ENCODE measurements at regions of chr19 and their contacts with region 1.

Region 1: GRCh38 chr19:42108527-42109389 is 23.5 kb downstream of the POU2F2 start:
- DNase-seq: peak; percentile 68
- H3K4me3 ChIP-seq: no peak overlapping the region
- H3K27ac ChIP-seq: no peak overlapping the region
- H3K4me1 ChIP-seq: peaks cover 35% of the 10 kb centered on the region
- H3K27me3 ChIP-seq: no peaks in the 10 kb centered on the region
- CTCF ChIP-seq: peak; percentile 100

Region 2: GRCh38 chr19:41993612-41994483 is 114.9 kb before region 1 on chr19 and contains the start of gene ATP1A3:
- CTCF ChIA-PET with region 1: no interaction called
- dilution Hi-C with region 1: no loop called
- in situ Hi-C with region 1: no loop called
- intact Hi-C with region 1: no loop called
- DNase-seq: peak; percentile 52
- H3K4me3 ChIP-seq: peak within 1 kb of the TSS in 1 of 3 experiments; percentile 23
- H3K27ac ChIP-seq: no peak within 1 kb of the TSS
- H3K4me1 ChIP-seq: peaks cover 6% of the 10 kb centered on the region
- H3K27me3 ChIP-seq: peaks cover 7% of the 10 kb centered on the region
- CTCF ChIP-seq: no peak
- total RNA-seq, gene ATP1A3: 0.87 TPM in 1 of 2 donors, not detected in the other

Region 3: DNA sequence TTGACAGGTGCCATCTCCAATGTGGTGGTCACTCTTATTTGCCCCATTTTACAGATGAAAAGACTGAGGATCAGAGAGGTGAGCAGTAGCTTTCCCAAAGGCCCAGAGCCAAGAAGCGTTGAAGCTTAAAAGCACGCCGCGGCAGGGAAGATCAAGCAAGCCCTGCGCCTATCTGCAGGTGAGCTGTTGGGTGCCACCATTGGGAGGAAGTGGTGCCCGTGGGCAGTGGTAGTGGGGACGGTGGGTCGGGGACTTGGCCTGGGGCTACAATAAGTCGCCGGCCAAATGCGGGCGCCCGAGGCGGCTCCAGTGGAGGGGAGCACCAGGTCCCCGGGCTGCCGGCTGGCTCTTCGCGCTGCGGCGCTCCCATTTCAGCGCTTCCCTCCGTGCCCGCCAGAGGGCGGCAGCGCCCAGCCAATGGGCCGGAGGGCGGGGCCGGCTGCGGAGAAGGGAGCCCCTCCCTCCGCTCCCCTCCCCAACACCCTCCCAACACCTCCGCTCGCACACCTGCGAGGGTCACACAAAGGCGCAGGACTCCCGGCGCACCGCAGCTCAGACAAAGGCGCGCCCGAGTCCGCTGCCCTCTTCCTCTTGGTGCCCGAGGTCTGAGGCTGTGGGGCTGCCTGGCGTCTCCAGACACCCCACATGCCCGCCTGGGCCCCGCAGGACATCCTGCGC is 24.2 kb after region 1 on chr19:
- CTCF ChIA-PET with region 1: interaction called, 18 read pairs
- dilution Hi-C with region 1: no loop called
- in situ Hi-C with region 1: no loop called
- intact Hi-C with region 1: loop called (anchors 1 kb)
- DNase-seq: peak; percentile 41
- H3K4me3 ChIP-seq: peak overlapping the region in 1 of 3 experiments; percentile 38
- H3K27ac ChIP-seq: no peak overlapping the region
- H3K4me1 ChIP-seq: peaks cover 33% of the 10 kb centered on the region
- H3K27me3 ChIP-seq: no peaks in the 10 kb centered on the region
- CTCF ChIP-seq: peak; percentile 55 to 94

Region 4: DNA sequence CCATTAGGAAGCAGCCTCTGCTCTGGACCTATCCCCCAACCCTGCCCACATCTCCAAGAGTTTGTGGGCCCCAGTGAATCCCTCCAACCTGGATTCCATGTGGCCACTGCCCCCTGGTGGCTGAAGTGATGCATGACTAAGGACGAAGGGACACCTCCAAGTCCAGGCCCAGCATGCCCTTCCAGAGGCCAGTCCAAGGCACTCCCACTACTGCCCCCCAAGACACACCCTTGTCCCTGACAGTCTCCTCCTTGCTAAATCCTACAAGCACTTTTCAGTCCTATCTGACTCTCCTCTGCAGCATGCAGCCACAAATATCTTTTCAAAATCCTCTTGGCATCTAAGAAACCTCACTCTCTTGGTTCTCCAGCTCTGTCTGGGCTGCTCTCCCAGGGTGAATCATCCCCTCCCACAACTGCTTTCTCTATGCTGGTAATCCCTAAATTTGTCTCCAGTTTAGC is 75.7 kb after region 1 on chr19:
- CTCF ChIA-PET with region 1: no interaction called
- dilution Hi-C with region 1: loop called (anchors 5 kb)
- in situ Hi-C with region 1: no loop called
- intact Hi-C with region 1: loop called (anchors 1 kb)
- DNase-seq: peak; percentile 62
- H3K4me3 ChIP-seq: no peak overlapping the region
- H3K27ac ChIP-seq: no peak overlapping the region
- H3K4me1 ChIP-seq: peaks cover 11% of the 10 kb centered on the region
- H3K27me3 ChIP-seq: no peaks in the 10 kb centered on the region
- CTCF ChIP-seq: peak; percentile 93 to 95

Region 5: GRCh38 chr19:42277821-42278451 is 169.2 kb after region 1 on chr19:
- CTCF ChIA-PET with region 1: no interaction called
- dilution Hi-C with region 1: no loop called
- in situ Hi-C with region 1: no loop called
- intact Hi-C with region 1: loop called (anchors 1 kb)
- DNase-seq: peak; percentile 69
- H3K4me3 ChIP-seq: peak overlapping the region; percentile 4 to 29 (median 9)
- H3K27ac ChIP-seq: peak overlapping the region; percentile 51
- H3K4me1 ChIP-seq: peaks cover 72% of the 10 kb centered on the region
- H3K27me3 ChIP-seq: no peaks in the 10 kb centered on the region
- CTCF ChIP-seq: peak in 1 of 2 donors; percentile 13

Region 6: GRCh38 chr19:42433503-42434260 is 324.9 kb after region 1 on chr19:
- CTCF ChIA-PET with region 1: no interaction called
- dilution Hi-C with region 1: no loop called
- in situ Hi-C with region 1: loop called in 1 of 2 experiments (anchors 10 kb)
- intact Hi-C with region 1: loop called (anchors 1 kb)
- DNase-seq: peak; percentile 39
- H3K4me3 ChIP-seq: no peak overlapping the region
- H3K27ac ChIP-seq: no peak overlapping the region
- H3K4me1 ChIP-seq: no peaks in the 10 kb centered on the region
- H3K27me3 ChIP-seq: no peaks in the 10 kb centered on the region
- CTCF ChIP-seq: peak; percentile 78 to 91

Measured in mammary epithelial cell (primary cell).